Activated CD4-positive, alpha-beta T cell treated with anti-CD3 and anti-CD28 coated beads for 36 hours (primary cell): ENCODE measurements at regions of chr6 and their contacts with region 1.

Region 1: DNA sequence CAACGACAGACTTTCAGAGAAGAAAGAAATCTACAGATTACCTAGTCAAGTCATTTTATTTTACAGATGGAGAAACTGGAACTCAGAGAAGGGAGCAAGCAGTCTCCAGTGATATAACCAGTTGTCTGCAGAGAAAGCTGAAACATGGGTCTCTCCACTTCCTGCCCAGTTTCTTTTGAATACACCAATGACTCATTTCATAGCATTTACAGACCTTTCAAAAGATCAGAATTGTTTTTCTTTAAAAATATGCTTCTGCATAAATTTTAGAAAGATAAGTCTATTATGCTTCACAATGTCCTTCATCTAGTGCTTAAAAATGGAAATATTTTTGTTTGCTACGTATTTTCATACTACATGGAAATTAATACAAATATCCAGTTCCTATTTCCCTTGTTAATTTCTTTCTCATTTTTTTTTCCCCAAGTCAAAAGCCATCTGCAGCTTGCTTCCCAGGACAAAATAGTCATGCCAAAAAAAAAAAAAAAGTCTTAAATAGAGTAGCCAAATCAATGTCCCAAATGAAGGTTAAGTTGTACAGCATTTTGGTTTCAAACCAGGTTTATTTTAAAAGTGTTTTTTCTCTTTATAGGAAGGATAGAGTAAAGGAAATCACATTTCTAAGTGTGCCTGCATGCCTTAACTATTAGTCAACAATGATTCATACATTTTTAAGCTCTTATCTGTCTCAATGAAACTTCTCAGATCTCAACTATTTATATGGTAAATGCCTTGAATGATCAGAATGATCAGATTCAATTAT is 36.9 kb downstream of the ARHGAP18 start:
- DNase-seq: peak; percentile 24
- ATAC-seq: peak; percentile 69
- H3K4me3 Mint-ChIP-seq: peak overlapping the region; percentile 59
- H3K27ac Mint-ChIP-seq: peak overlapping the region; percentile 92
- H3K4me1 Mint-ChIP-seq: peaks cover 38% of the 10 kb centered on the region
- H3K27me3 Mint-ChIP-seq: peaks cover 2% of the 10 kb centered on the region

Region 2: DNA sequence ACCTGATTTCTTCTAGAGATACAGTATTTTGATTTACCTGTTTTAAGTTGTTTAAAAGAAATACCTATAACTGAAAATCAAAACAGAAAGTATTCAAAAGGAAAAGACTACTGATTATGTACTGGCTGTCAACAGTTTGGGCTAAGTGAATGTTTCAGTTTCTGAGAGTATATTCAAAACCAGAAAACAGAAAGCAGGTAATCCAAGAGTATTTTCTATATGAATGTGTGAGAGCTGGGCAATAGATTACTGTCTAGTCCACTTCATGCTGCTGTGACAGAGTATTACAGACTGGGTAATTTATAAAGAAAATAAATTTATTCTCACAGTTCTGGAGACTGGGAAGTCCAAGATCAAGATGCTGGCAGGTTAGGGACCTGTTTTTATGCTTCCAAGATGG is 224.1 kb before region 1 on chr6:
- CTCF ChIA-PET with region 1: no interaction called
- POLR2A ChIA-PET with region 1: no interaction called
- intact Hi-C with region 1: loop called in 1 of 2 experiments (anchors 2 kb)
- DNase-seq: no peak
- ATAC-seq: peak; percentile 92
- H3K4me3 Mint-ChIP-seq: no peak overlapping the region
- H3K27ac Mint-ChIP-seq: no peak overlapping the region
- H3K4me1 Mint-ChIP-seq: peaks cover 76% of the 10 kb centered on the region
- H3K27me3 Mint-ChIP-seq: no peaks in the 10 kb centered on the region

Region 3: GRCh38 chr6:129490521-129491245 is 182.4 kb before region 1 on chr6:
- CTCF ChIA-PET with region 1: no interaction called
- POLR2A ChIA-PET with region 1: no interaction called
- intact Hi-C with region 1: loop called (anchors 1 to 2 kb)
- DNase-seq: peak; percentile 71
- ATAC-seq: peak; percentile 84
- H3K4me3 Mint-ChIP-seq: peak overlapping the region; percentile 70
- H3K27ac Mint-ChIP-seq: peak overlapping the region; percentile 97
- H3K4me1 Mint-ChIP-seq: peaks cover 70% of the 10 kb centered on the region
- H3K27me3 Mint-ChIP-seq: no peaks in the 10 kb centered on the region

Region 4: DNA sequence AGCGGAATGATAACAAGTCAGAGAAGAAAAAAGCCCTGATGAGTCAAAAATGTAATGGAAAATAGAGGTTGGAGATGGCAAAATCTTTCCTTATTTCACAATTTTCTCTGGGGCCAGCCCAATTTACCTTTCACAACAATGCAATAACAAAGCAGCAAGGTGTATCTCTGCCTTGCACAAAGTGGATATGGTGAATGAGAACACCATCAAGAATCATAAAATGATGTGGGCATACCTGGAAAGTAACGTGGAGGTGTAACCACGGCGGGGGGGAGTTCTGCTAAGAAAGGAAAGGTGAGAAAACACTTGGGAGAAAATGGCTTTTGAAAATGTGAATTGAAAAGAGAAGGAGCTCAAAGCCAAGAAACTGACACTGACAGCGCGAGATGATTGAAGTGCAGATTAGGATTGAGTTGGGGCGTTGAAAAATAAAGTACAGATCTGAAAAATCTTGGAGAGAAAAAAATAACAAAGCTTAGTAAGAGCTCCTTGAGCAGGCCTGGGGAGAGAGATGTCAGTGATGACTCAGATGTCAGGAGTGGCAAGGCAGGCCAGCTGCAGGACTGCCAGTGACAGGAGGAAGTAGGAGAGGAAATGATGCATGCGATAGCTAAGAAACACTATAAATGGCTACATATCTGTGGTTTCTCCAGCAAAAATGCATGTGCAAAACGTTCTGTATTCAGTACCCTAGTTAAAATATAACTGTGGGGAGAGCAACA is 10.7 kb after region 1 on chr6:
- CTCF ChIA-PET with region 1: interaction called, 8 read pairs
- POLR2A ChIA-PET with region 1: interaction called, 5 read pairs
- intact Hi-C with region 1: loop called (anchors 1 kb)
- DNase-seq: peak; percentile 79
- ATAC-seq: peak; percentile 96
- H3K4me3 Mint-ChIP-seq: peak overlapping the region; percentile 28
- H3K27ac Mint-ChIP-seq: peak overlapping the region; percentile 75
- H3K4me1 Mint-ChIP-seq: peaks cover 52% of the 10 kb centered on the region
- H3K27me3 Mint-ChIP-seq: no peaks in the 10 kb centered on the region

Region 5: DNA sequence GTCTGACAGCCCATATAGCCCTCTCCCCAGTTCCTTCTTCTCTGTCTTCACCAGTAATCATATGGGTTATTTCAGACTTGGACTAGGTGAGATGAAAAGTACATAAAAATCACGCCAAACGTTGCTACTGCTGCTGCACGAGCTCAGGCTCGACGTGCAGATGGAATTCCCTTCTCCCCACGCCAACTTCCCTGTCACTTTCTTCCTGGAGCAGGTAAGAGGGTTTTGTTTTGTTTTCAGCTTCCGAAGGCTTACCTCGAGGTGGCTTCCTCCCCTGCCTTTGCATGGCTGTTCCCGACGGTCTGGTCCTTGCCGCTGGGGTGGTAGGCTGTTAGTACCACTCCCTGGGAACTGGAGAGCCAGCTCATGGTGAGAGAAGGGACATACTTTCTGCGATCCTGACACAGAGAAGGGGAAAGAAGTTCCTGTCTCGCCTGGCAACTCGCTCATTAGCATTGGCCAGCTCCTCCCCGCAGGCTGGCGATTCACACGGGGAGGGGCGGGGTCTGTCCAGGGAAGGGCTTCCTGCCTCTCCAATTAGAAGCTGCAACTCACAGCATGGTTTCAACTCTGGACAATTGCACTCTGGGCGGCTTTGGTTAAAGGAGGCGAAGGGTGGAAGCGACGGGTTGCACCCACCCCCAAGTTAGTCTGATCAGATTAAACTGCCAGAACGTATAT is 36.8 kb after region 1 on chr6 and contains the start of gene ARHGAP18:
- CTCF ChIA-PET with region 1: interaction called, 3 read pairs
- POLR2A ChIA-PET with region 1: no interaction called
- intact Hi-C with region 1: loop called (anchors 1 to 2 kb)
- DNase-seq: peak; percentile 84
- ATAC-seq: peak; percentile 94
- H3K4me3 Mint-ChIP-seq: peak within 1 kb of the TSS; percentile 88
- H3K27ac Mint-ChIP-seq: peak within 1 kb of the TSS; percentile 83
- H3K4me1 Mint-ChIP-seq: peaks cover 27% of the 10 kb centered on the region
- H3K27me3 Mint-ChIP-seq: peaks cover 2% of the 10 kb centered on the region
- total RNA-seq, gene ARHGAP18: 5.2 to 6.8 TPM

Region 6: GRCh38 chr6:129730477-129731165 is 57.6 kb after region 1 on chr6:
- CTCF ChIA-PET with region 1: interaction called, 10 read pairs
- POLR2A ChIA-PET with region 1: interaction called, 4 read pairs
- intact Hi-C with region 1: loop called (anchors 1 kb)
- DNase-seq: peak; percentile 27
- ATAC-seq: peak; percentile 39
- H3K4me3 Mint-ChIP-seq: no peak overlapping the region
- H3K27ac Mint-ChIP-seq: peak overlapping the region; percentile 68
- H3K4me1 Mint-ChIP-seq: peaks cover 9% of the 10 kb centered on the region
- H3K27me3 Mint-ChIP-seq: no peaks in the 10 kb centered on the region

Region 7: DNA sequence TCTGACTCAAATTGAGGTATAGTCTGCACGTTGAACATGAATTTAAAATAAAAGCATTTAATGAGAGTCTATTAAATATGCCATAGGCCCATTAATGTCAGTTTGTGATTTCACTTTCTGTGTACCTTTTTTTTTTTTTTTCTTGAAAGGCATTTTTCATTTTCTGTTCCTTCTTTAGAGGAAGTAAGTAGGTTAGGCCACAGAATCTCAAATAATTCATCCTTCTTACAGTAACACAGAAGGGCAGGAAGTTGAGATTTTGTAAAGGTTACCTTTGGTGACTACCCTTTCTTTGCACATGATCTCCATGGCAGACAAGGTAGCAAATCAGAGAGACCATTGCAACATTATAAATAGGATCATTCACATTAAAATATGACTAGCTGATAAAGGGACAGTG is 354.9 kb after region 1 on chr6:
- CTCF ChIA-PET with region 1: no interaction called
- POLR2A ChIA-PET with region 1: no interaction called
- intact Hi-C with region 1: loop called in 1 of 2 experiments (anchors 2 kb)
- DNase-seq: no peak
- ATAC-seq: peak; percentile 67
- H3K4me3 Mint-ChIP-seq: no peak overlapping the region
- H3K27ac Mint-ChIP-seq: peak overlapping the region; percentile 66
- H3K4me1 Mint-ChIP-seq: peaks cover 62% of the 10 kb centered on the region
- H3K27me3 Mint-ChIP-seq: no peaks in the 10 kb centered on the region